ENCODE measurements at regions of chr12 and their contacts with region 1.

Region 1: GRCh38 chr12:57904848-57905811 is 36.2 kb upstream of the ATP23 start:
- DNase-seq: no peak
- H3K4me3 ChIP-seq: no peak overlapping the region
- CTCF ChIP-seq: peak; percentile 100

Region 2: DNA sequence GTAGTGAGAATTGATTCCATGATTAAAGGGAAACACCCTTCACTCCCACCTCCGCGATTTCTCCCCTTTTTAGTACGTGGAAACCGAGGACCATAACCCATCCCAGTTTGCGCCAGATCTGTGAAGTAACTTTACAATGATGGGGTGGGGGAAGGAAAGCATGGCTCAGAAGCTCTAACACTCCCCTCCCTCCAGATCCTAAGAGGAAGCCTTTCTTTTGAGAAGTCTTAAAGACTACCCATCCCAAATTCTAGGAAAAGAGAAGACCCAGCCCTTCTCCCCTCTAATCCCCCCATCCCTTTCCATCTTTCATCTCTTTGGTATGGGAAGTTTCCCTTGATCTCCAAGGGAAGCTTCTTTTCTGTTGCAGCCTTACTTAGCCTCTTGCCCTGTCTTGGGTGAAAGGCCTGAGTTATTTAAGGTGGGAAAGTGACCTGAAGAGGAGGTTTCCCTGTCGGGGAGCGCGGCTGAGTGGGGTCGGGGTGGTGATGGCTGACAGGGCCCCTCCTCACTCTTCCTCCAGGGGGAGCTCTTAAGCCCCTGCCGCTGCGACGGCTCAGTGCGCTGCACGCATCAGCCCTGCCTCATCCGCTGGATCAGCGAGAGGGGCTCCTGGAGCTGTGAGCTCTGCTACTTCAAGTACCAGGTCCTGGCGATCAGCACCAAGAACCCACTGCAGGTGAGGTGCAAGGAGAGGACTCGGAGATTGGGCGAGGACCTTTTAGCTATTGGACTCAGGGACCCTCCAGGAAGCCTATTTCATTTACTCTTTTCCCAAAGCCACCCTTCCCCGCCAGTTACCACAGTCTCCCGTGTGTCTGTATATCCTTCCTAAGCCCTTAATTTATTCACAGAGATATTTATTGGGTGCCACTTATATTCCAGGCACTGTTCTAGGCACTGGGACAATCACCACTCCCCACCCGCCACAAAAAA is 148.5 kb before region 1 on chr12:
- CTCF ChIA-PET with region 1: interaction called, 24 read pairs
- POLR2A ChIA-PET with region 1: no interaction called
- DNase-seq: no peak
- H3K4me3 ChIP-seq: peak overlapping the region; percentile 56; the same call in 1 of the 2 replicates
- CTCF ChIP-seq: peak; percentile 83

Region 3: GRCh38 chr12:57782608-57783465 is 122.3 kb before region 1 on chr12 and contains the start of gene TSFM:
- CTCF ChIA-PET with region 1: interaction called, 60 read pairs
- POLR2A ChIA-PET with region 1: no interaction called
- DNase-seq: peak; percentile 69
- H3K4me3 ChIP-seq: peak within 1 kb of the TSS; percentile 94
- CTCF ChIP-seq: peak; percentile 95

Region 4: DNA sequence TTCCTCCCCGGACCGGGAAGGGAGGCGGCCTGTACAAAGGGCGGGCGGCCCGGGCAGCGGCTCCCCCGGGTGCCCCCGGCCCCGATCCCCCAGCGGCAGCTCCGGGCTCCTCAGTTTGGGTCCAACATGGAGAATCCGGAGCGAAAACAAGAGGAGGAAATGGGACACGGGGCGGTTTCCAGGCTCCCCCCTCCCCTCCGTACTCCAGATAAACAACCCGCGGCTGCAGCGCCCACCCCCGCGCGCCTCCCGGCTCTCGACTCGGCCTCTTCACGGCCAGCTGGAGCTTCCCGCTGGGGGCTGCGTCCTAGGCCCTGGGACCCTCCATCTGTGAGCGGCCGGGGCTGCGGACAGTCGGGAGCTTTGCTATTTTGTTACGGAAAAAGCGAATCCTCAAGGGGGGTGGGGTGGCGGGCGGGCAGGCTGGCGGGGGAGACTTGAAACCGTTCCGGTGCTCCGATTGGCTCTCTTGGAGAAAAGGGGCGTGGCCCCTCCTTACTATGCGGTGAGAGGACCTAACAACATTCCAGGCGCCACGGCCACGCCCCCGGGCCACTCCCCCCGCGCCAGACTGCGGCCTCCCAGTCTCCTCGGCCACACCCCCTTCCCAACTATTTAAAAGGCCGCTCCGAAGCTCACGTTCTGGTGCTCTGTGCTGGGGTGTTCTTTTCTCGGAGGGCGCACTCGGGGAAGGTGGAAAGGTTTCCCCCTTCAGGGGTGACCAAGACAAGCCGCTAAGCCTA is 58.4 kb before region 1 on chr12 and contains the start of gene CTDSP2:
- CTCF ChIA-PET with region 1: interaction called, 484 read pairs
- POLR2A ChIA-PET with region 1: interaction called, 10 read pairs
- DNase-seq: peak; percentile 85
- H3K4me3 ChIP-seq: peak within 1 kb of the TSS; percentile 99
- CTCF ChIP-seq: no peak

Region 5: GRCh38 chr12:57888409-57889157 is 16.5 kb before region 1 on chr12:
- CTCF ChIA-PET with region 1: interaction called, 71 read pairs
- POLR2A ChIA-PET with region 1: no interaction called
- DNase-seq: no peak
- H3K4me3 ChIP-seq: peak overlapping the region; percentile 38
- CTCF ChIP-seq: no peak

Region 6: GRCh38 chr12:58081488-58081887 is 176.4 kb after region 1 on chr12:
- CTCF ChIA-PET with region 1: no interaction called
- POLR2A ChIA-PET with region 1: no interaction called
- DNase-seq: no peak
- H3K4me3 ChIP-seq: no peak overlapping the region
- CTCF ChIP-seq: no peak

Region 7: GRCh38 chr12:58148405-58148804 is 243.3 kb after region 1 on chr12:
- CTCF ChIA-PET with region 1: no interaction called
- POLR2A ChIA-PET with region 1: no interaction called
- DNase-seq: peak; percentile 56
- H3K4me3 ChIP-seq: no peak overlapping the region
- CTCF ChIP-seq: no peak